T-cell (primary cell): ENCODE measurements at regions of chr21 and their contacts with region 1.

Region 1: GRCh38 chr21:35106246-35106835 is 57.2 kb upstream of the RUNX1 start:
- DNase-seq: no peak
- ATAC-seq: no peak
- H3K4me3 ChIP-seq: no peak overlapping the region
- H3K4me3 Mint-ChIP-seq: no peak overlapping the region
- H3K27ac ChIP-seq: no peak overlapping the region
- H3K27ac Mint-ChIP-seq: no peak overlapping the region
- H3K4me1 ChIP-seq: peaks cover 6 to 15% of the 10 kb centered on the region in 2 experiments
- H3K4me1 Mint-ChIP-seq: no peaks in the 10 kb centered on the region
- H3K27me3 ChIP-seq: no peaks in the 10 kb centered on the region
- H3K27me3 Mint-ChIP-seq: no peaks in the 10 kb centered on the region

Region 2: GRCh38 chr21:35120631-35121186 is 14.4 kb after region 1 on chr21:
- CTCF ChIA-PET with region 1: no interaction called
- POLR2A ChIA-PET with region 1: interaction called in 1 of 2 experiments, 11 read pairs
- DNase-seq: no peak
- ATAC-seq: no peak
- H3K4me3 ChIP-seq: no peak overlapping the region
- H3K4me3 Mint-ChIP-seq: no peak overlapping the region
- H3K27ac ChIP-seq: no peak overlapping the region
- H3K27ac Mint-ChIP-seq: no peak overlapping the region
- H3K4me1 ChIP-seq: no peaks in the 10 kb centered on the region
- H3K4me1 Mint-ChIP-seq: no peaks in the 10 kb centered on the region
- H3K27me3 ChIP-seq: peaks cover 0 to 6% of the 10 kb centered on the region in 2 experiments
- H3K27me3 Mint-ChIP-seq: no peaks in the 10 kb centered on the region